ENCODE measurements at regions of chr17 and their contacts with region 1.

Region 1: GRCh38 chr17:27879987-27880608 is 13.1 kb downstream of the LYRM9 start:
- DNase-seq: peak; percentile 74 to 78
- H3K4me3 ChIP-seq: no peak overlapping the region
- H3K27ac ChIP-seq: no peak overlapping the region
- H3K4me1 ChIP-seq: no peaks in the 10 kb centered on the region
- H3K27me3 ChIP-seq: no peaks in the 10 kb centered on the region
- CTCF ChIP-seq: peak in 5 of 6 experiments; percentile 71 to 91 (median 74)
- POLR2A ChIP-seq: no peak

Region 2: GRCh38 chr17:27760069-27760885 is 119.8 kb before region 1 on chr17:
- intact Hi-C with region 1: loop called (anchors 5 kb)
- DNase-seq: peak; percentile 61 to 63
- H3K4me3 ChIP-seq: no peak overlapping the region
- H3K27ac ChIP-seq: no peak overlapping the region
- H3K4me1 ChIP-seq: no peaks in the 10 kb centered on the region
- H3K27me3 ChIP-seq: no peaks in the 10 kb centered on the region
- CTCF ChIP-seq: peak; percentile 64 to 94 (median 70)
- POLR2A ChIP-seq: no peak

Region 3: GRCh38 chr17:27805520-27806146 is 74.5 kb before region 1 on chr17:
- intact Hi-C with region 1: loop called (anchors 5 kb)
- DNase-seq: peak; percentile 83 to 88
- H3K4me3 ChIP-seq: no peak overlapping the region
- H3K27ac ChIP-seq: no peak overlapping the region
- H3K4me1 ChIP-seq: peaks cover 0 to 5% of the 10 kb centered on the region in 2 donors
- H3K27me3 ChIP-seq: no peaks in the 10 kb centered on the region
- CTCF ChIP-seq: peak; percentile 62 to 92 (median 84)
- POLR2A ChIP-seq: no peak

Measured in thyroid gland (tissue), 4 donors.